ENCODE measurements at regions of chr3 and their contacts with region 1.

Region 1: DNA sequence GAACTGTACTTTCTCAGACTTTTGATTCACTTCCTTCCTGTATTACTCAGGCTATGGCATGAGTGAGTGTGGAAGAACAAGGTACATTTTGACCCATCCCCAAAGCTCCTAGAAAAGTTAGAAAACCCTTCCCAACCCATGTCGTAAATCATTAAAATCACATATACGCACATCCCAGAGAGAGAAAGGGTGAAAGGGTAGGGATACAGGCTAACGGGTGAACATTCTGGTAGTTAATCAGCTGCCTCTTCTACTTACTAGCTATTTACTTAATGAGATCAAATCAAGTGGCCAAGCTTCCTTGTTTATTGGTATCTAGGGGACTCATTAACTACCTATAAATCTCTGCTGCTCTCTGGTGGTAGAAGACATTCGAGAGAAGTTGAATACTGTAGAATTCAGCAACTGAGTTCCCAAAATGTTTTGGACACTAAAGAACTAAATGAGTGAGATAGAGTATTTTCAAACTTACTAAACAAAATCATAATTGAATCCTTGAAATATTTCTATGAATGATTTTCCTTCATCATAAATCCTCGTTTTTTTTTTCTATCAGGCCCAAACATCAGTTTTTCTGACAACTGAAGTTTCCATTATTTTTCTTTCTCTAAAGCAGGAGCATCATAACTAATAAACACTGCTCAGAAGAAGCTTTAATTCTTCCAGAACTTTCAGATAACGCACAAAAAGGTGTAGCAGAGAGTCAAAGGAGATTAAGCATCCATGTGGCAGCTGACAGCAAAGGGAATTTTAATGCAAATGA is 124.2 kb downstream of the IMPG2 start:
- DNase-seq: peak; percentile 35
- H3K4me3 Mint-ChIP-seq: no peak overlapping the region
- H3K27ac Mint-ChIP-seq: peak overlapping the region; percentile 50
- H3K4me1 Mint-ChIP-seq: peaks cover 18% of the 10 kb centered on the region
- H3K27me3 Mint-ChIP-seq: no peaks in the 10 kb centered on the region
- CTCF ChIP-seq: peak; percentile 61

Region 2: DNA sequence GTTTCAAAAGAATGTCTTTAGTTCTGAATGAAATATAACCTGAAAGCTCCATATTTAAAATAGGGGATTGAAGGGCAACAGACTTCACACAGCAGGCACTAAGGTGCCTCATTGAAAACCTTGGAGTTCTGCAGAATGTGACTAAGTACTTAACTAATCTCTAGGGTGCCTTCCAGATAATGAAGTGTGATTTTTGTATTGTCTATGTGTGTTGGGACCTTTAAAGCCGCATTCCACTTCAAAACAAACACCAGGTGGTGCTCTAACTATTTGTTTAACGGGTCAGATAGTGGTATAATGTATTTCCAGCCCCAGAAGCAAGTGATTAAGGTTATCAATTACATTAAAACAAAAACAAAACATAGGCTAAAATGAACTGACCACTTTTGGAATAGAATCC is 458.8 kb before region 1 on chr3:
- CTCF ChIA-PET with region 1: no interaction called
- intact Hi-C with region 1: loop called (anchors 1 kb)
- DNase-seq: peak; percentile 8
- H3K4me3 Mint-ChIP-seq: no peak overlapping the region
- H3K27ac Mint-ChIP-seq: no peak overlapping the region
- H3K4me1 Mint-ChIP-seq: peaks cover 13% of the 10 kb centered on the region
- H3K27me3 Mint-ChIP-seq: no peaks in the 10 kb centered on the region
- CTCF ChIP-seq: peak; percentile 32

Region 3: GRCh38 chr3:100759159-100759558 is 437.0 kb before region 1 on chr3:
- CTCF ChIA-PET with region 1: interaction called, 8 read pairs
- intact Hi-C with region 1: loop called (anchors 2 kb)
- DNase-seq: no peak
- H3K4me3 Mint-ChIP-seq: no peak overlapping the region
- H3K27ac Mint-ChIP-seq: peak overlapping the region; percentile 4
- H3K4me1 Mint-ChIP-seq: no peaks in the 10 kb centered on the region
- H3K27me3 Mint-ChIP-seq: no peaks in the 10 kb centered on the region
- CTCF ChIP-seq: no peak

Region 4: DNA sequence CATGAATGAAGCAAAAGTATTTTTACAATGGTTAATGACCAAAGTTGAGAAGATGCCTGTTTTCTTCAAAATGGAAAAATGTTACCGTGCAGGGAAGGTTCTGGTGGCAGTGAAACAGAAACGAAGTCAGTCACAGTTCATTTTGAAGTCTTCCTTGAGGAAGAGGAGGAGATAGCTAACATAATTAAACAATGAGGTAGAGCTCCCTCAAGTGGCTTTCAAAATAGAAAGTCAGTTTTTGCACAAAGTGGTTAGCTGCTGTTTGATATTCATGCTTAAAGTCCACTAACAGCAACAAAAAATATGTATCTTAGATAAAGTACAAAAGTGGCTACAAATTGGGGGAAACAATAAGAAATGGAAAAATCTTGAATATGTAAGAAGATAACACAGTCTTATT is 399.6 kb before region 1 on chr3:
- CTCF ChIA-PET with region 1: interaction called, 10 read pairs
- intact Hi-C with region 1: no loop called
- DNase-seq: no peak
- H3K4me3 Mint-ChIP-seq: no peak overlapping the region
- H3K27ac Mint-ChIP-seq: no peak overlapping the region
- H3K4me1 Mint-ChIP-seq: no peaks in the 10 kb centered on the region
- H3K27me3 Mint-ChIP-seq: no peaks in the 10 kb centered on the region
- CTCF ChIP-seq: peak; percentile 22

Region 5: DNA sequence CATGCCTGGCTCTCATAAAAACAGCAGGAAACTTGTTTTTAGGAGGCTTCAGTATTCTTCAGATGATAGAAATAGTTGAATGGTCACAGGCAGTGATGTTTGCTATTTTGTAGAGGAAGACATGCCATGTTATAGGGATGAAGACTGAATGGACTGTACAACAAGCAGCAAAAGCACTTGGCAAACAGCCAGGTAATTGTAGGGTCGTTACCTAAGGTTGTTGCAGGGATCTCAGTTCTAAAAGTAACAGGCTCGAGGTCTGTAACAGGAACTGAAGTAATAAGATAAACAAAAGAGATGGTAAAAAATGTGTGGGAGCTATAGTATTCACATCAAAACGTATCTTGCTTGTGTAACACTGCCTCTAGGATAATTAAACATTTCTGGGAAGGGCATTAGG is 370.6 kb before region 1 on chr3:
- CTCF ChIA-PET with region 1: no interaction called
- intact Hi-C with region 1: loop called (anchors 1 kb)
- DNase-seq: no peak
- H3K4me3 Mint-ChIP-seq: no peak overlapping the region
- H3K27ac Mint-ChIP-seq: no peak overlapping the region
- H3K4me1 Mint-ChIP-seq: no peaks in the 10 kb centered on the region
- H3K27me3 Mint-ChIP-seq: no peaks in the 10 kb centered on the region
- CTCF ChIP-seq: no peak

Region 6: GRCh38 chr3:100893590-100893989 is 302.5 kb before region 1 on chr3:
- CTCF ChIA-PET with region 1: interaction called, 21 read pairs
- intact Hi-C with region 1: loop called (anchors 1 kb)
- DNase-seq: peak; percentile 50
- H3K4me3 Mint-ChIP-seq: no peak overlapping the region
- H3K27ac Mint-ChIP-seq: no peak overlapping the region
- H3K4me1 Mint-ChIP-seq: peaks cover 16% of the 10 kb centered on the region
- H3K27me3 Mint-ChIP-seq: no peaks in the 10 kb centered on the region
- CTCF ChIP-seq: peak; percentile 18

Region 7: DNA sequence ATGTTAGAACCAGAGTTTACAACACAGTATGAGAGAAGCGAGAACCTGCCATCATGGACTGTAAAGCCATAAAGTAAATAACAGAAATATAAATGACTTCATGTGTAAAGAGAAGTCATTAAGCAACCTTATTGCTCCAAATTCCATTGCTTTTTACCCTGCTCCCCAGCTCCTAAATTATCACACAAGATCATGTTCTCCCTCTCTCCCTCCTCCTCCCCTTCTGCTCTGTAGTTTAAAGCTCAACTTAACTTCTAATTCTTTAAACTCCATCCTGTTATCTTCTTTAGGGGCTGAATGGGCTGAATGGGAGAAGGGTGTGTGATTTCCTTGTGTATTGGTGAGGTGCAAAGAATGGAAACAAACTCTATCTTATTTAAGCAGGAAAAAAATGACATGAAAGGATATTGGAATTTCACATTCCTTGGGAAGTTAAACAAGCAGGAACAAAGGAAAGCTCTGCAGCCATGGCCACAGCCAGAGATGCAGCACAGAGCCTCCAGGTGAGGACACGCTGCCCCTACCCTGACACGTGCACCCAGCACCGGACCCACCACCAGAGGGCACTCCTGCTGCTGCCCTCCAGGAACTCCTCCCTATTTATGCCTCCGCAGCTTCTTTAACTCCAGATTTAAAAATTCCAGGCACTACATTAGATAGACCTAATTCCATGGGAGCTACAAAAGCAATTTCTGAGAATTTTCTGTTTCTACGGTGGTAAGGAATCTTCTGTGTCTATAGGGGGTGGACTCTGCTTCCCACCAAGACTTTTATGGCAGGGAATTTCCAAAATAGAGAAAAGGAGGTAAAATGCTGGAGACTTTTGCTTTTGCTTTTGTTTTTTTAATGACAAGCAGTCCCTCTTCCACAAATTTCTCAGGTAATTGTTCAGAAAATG is 126.0 kb before region 1 on chr3:
- CTCF ChIA-PET with region 1: interaction called, 66 read pairs
- intact Hi-C with region 1: loop called (anchors 1 kb)
- DNase-seq: peak; percentile 94
- H3K4me3 Mint-ChIP-seq: no peak overlapping the region
- H3K27ac Mint-ChIP-seq: peak overlapping the region; percentile 72
- H3K4me1 Mint-ChIP-seq: peaks cover 47% of the 10 kb centered on the region
- H3K27me3 Mint-ChIP-seq: no peaks in the 10 kb centered on the region
- CTCF ChIP-seq: peak; percentile 80

Measured in Calu3 (cell line).